Esophagus muscularis mucosa (tissue), 4 donors: ENCODE measurements at regions of chr3 and their contacts with region 1.

Region 1: DNA sequence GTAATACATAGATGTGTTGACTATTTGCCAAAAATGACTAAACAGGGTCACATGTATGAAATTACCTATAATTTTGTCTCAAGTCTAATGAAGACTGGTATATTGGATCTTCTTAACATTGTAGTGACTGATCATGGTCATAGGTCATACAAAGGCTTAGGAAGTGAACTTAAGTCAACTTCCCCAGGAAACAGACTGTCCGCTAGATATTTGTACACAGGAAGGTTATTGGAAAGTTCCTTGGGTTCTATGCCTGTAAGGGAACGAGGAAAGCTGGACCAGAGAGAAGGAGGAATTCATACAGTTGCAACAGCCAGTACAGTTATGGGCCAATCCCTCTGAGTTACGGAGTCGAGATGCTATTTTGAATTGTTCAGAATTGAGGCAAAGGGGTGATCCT is 462.0 kb upstream of the THRB start:
- DNase-seq: no peak
- H3K4me3 ChIP-seq: no peak overlapping the region
- H3K27ac ChIP-seq: no peak overlapping the region
- H3K4me1 ChIP-seq: peaks cover 3 to 35% (median 6%) of the 10 kb centered on the region in 4 donors
- H3K27me3 ChIP-seq: no peaks in the 10 kb centered on the region
- CTCF ChIP-seq: no peak
- EP300 ChIP-seq: no peak
- POLR2A ChIP-seq: no peak

Region 2: GRCh38 chr3:24773798-24774197 is 182.8 kb before region 1 on chr3:
- intact Hi-C with region 1: loop called (anchors 5 kb)
- DNase-seq: no peak
- H3K4me3 ChIP-seq: no peak overlapping the region
- H3K27ac ChIP-seq: no peak overlapping the region
- H3K4me1 ChIP-seq: peaks cover 0 to 6% (median 2%) of the 10 kb centered on the region in 4 donors
- H3K27me3 ChIP-seq: no peaks in the 10 kb centered on the region
- CTCF ChIP-seq: peak; percentile 78 to 82 (median 80)
- EP300 ChIP-seq: no peak
- POLR2A ChIP-seq: no peak

Region 3: GRCh38 chr3:24914036-24914435 is 42.6 kb before region 1 on chr3:
- intact Hi-C with region 1: no loop called
- DNase-seq: no peak
- H3K4me3 ChIP-seq: no peak overlapping the region
- H3K27ac ChIP-seq: no peak overlapping the region
- H3K4me1 ChIP-seq: no peaks in the 10 kb centered on the region
- H3K27me3 ChIP-seq: no peaks in the 10 kb centered on the region
- CTCF ChIP-seq: no peak
- EP300 ChIP-seq: no peak
- POLR2A ChIP-seq: no peak